Ovary (tissue), 10 donors: ENCODE measurements at regions of chr4 and their contacts with region 1.

Region 1: DNA sequence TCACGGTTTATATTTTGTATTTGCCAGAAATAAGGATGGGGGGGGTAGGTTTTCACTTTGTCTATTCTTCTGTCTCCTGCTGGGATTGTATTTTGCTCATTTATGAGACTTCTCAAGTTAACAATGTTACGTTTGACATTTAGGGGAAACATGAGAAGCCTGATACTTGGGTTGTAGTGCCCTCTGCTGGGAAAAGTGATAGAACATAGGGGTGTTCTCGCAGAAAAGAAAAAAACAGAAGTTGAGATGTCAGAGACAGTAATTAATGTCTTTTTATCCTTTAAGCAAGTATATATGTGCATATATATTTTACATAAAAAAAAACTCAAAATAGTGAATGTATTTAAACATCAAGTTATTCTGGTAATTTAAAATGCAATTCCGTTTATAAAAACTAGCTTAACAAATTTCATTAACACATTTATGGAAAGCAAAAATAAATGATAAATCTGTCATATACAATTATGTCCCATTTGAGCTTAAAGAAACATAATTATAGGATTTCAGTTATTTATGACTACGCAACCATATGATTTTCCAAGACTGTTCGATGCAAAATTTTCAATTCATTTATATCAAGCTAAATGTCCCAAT is 46.0 kb upstream of the TMPRSS11F start:
- DNase-seq: peak in 1 of 5 donors; percentile 21
- H3K4me3 ChIP-seq: no peak overlapping the region
- H3K27ac ChIP-seq: no peak overlapping the region
- H3K4me1 ChIP-seq: no peaks in the 10 kb centered on the region
- H3K27me3 ChIP-seq: no peaks in the 10 kb centered on the region
- CTCF ChIP-seq: peak in 1 of 3 donors; percentile 22
- EP300 ChIP-seq: no peak
- POLR2A ChIP-seq: no peak

Region 2: GRCh38 chr4:67983333-67983732 is 192.3 kb before region 1 on chr4:
- intact Hi-C with region 1: loop called in 2 of 4 experiments (anchors 5 to 10 kb)
- DNase-seq: no peak
- H3K4me3 ChIP-seq: no peak overlapping the region
- H3K27ac ChIP-seq: no peak overlapping the region
- H3K4me1 ChIP-seq: no peaks in the 10 kb centered on the region
- H3K27me3 ChIP-seq: no peaks in the 10 kb centered on the region
- CTCF ChIP-seq: no peak
- EP300 ChIP-seq: no peak
- POLR2A ChIP-seq: no peak

Region 3: DNA sequence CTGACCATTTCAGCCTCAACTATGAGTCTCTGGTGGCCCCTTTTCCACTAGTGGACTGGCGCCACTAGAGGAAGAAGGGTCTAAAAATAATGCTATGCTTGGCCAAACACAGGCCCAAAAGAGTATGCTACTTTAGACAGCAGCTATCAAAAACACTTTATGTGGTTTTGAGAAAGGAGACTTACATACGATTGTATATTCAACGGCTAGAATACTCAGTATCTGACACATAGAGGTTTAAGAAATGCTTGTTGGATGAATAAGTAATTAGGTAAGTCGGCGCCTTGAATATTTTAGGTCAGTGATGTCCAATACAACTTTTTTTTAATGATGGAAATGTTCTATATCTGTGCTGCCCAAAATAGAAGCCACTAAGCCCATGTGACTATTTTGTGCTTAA is 186.7 kb before region 1 on chr4:
- intact Hi-C with region 1: loop called in 2 of 4 experiments (anchors 5 to 10 kb)
- DNase-seq: no peak
- H3K4me3 ChIP-seq: no peak overlapping the region
- H3K27ac ChIP-seq: no peak overlapping the region
- H3K4me1 ChIP-seq: no peaks in the 10 kb centered on the region
- H3K27me3 ChIP-seq: no peaks in the 10 kb centered on the region
- CTCF ChIP-seq: no peak
- EP300 ChIP-seq: no peak
- POLR2A ChIP-seq: no peak